GM12878 (cell line): ENCODE measurements at regions of chr16 and their contacts with region 1.

Region 1: GRCh38 chr16:30407102-30407803 is at the start of gene ZNF771:
- DNase-seq: no peak
- ATAC-seq: peak; percentile 93
- H3K4me3 ChIP-seq: peak within 1 kb of the TSS; percentile 83
- H3K27ac ChIP-seq: no peak within 1 kb of the TSS
- H3K4me1 ChIP-seq: peaks cover 14% of the 10 kb centered on the region
- H3K27me3 ChIP-seq: no peaks in the 10 kb centered on the region; a peak in 1 of 4 replicates
- CTCF ChIP-seq: peak in 1 of 3 experiments; percentile 21; a peak in 1 of 6 replicates
- EP300 ChIP-seq: no peak
- POLR2A ChIP-seq: peak; percentile 82
- RAD21 ChIP-seq: no peak
- polyA plus RNA-seq, gene ZNF771: 0.98 to 2.0 TPM

Region 2: DNA sequence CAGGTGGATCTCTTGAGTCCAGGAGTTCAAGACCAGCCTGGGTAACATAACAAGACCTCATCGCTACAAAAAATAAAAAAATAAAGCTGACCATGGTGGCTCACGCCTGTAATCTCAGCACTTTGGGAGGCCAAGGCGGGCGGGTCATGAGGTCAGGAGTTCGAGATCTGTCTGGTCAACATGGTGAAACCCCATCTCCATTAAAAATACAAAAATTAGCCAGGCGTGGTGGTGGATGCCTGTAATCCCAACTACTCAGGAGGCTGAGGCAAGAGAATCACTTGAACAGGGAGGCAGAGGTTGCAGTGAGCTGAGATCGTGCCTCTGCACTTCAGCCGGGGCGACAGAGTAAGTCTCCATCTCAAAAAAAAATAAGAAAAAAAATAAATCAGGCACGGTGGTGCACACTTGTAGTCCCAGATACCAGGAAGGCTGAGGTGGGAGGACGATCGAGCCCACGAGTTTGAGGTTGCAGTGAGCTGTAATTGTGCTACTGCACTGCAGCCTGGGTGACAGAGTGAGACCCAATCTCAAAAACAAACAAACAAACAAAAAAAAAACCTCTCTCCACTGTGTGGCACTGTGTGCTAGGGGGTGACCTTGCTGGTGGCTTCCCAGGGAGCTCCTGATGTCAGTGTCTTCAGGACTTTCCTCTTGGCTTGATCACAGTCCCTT is 264.4 kb before region 1 on chr16:
- CTCF ChIA-PET with region 1: interaction called, 19 read pairs
- POLR2A ChIA-PET with region 1: no interaction called
- RAD21 ChIA-PET with region 1: interaction called, 7 read pairs
- SMC1A ChIA-PET with region 1: interaction called, 8 read pairs
- in situ Hi-C with region 1: no loop called
- intact Hi-C with region 1: no loop called
- DNase-seq: peak; percentile 30
- ATAC-seq: peak; percentile 91
- H3K4me3 ChIP-seq: no peak overlapping the region
- H3K27ac ChIP-seq: no peak overlapping the region
- H3K4me1 ChIP-seq: peaks cover 6% of the 10 kb centered on the region; the same call in 1 of the 2 replicates
- H3K27me3 ChIP-seq: no peaks in the 10 kb centered on the region
- CTCF ChIP-seq: peak; percentile 38 to 59 (median 48); a peak in 4 of 6 replicates
- EP300 ChIP-seq: no peak
- POLR2A ChIP-seq: no peak
- RAD21 ChIP-seq: peak; percentile 84

Region 3: GRCh38 chr16:30355144-30355894 is 51.9 kb before region 1 on chr16 and contains the start of gene CD2BP2:
- CTCF ChIA-PET with region 1: interaction called, 15 read pairs
- POLR2A ChIA-PET with region 1: interaction called, 3 read pairs
- RAD21 ChIA-PET with region 1: interaction called, 11 read pairs
- SMC1A ChIA-PET with region 1: no interaction called
- in situ Hi-C with region 1: no loop called
- intact Hi-C with region 1: no loop called
- DNase-seq: peak; percentile 93
- ATAC-seq: peak; percentile 81
- H3K4me3 ChIP-seq: peak within 1 kb of the TSS; percentile 94
- H3K27ac ChIP-seq: peak within 1 kb of the TSS; percentile 93
- H3K4me1 ChIP-seq: peaks cover 27% of the 10 kb centered on the region
- H3K27me3 ChIP-seq: no peaks in the 10 kb centered on the region
- CTCF ChIP-seq: no peak
- EP300 ChIP-seq: peak in 1 of 2 experiments; percentile 47; a peak in 1 of 4 replicates
- POLR2A ChIP-seq: peak; percentile 68
- RAD21 ChIP-seq: no peak
- polyA plus RNA-seq, gene CD2BP2: 3.3 to 5.5 TPM

Region 4: DNA sequence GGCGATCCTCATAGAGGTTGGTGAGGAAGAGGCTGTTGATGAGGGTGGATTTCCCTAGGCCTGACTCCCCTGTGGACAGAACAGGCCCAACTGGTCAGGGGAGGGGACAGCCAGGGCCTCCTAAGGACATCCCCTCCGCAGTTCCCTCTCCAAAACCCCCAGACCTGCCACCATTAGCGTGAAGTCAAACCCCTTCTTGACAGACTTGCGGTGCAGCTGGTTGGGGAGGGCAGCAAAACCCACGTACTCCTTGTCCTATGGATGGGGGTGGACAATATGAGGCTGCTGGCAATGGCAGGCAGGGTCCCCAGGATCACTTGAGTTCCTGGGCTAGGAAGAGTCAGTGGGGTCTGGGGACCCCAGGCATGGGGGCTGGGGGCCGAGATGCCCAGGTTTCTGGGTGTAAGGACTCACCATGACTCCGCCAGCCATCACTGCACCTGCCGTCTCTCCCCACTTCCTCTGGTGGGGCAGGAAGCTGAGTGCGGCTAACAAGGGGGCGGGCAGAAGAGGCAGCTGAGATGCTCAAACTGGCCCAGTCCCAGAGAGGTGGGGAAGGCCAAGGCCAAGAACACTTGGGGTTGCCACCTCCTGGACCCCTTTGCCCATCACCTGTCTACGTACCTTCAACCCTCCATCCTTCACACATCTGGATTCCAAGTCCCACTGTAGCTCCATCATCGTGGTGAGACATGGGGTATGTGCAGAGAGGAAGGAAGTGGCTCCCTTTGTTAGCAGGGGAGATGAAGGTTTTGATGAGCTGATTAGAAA is 25.0 kb before region 1 on chr16 and contains the start of gene SEPTIN1:
- CTCF ChIA-PET with region 1: interaction called, 23 read pairs
- POLR2A ChIA-PET with region 1: interaction called, 5 read pairs
- RAD21 ChIA-PET with region 1: interaction called, 25 read pairs
- SMC1A ChIA-PET with region 1: interaction called, 12 read pairs
- in situ Hi-C with region 1: no loop called
- intact Hi-C with region 1: no loop called
- DNase-seq: peak; percentile 40
- ATAC-seq: peak; percentile 61
- H3K4me3 ChIP-seq: peak within 1 kb of the TSS; percentile 97
- H3K27ac ChIP-seq: peak within 1 kb of the TSS; percentile 91
- H3K4me1 ChIP-seq: peaks cover 26% of the 10 kb centered on the region
- H3K27me3 ChIP-seq: no peaks in the 10 kb centered on the region
- CTCF ChIP-seq: no peak
- EP300 ChIP-seq: no peak
- POLR2A ChIP-seq: peak; percentile 92
- RAD21 ChIP-seq: no peak
- polyA plus RNA-seq, gene SEPTIN1: 2.8 to 16.0 TPM

Region 5: GRCh38 chr16:30417529-30418349 is 10.5 kb after region 1 on chr16:
- CTCF ChIA-PET with region 1: interaction called, 20 read pairs
- POLR2A ChIA-PET with region 1: interaction called, 7 read pairs
- RAD21 ChIA-PET with region 1: interaction called, 17 read pairs
- SMC1A ChIA-PET with region 1: interaction called, 7 read pairs
- in situ Hi-C with region 1: no loop called
- intact Hi-C with region 1: no loop called
- DNase-seq: peak; percentile 84
- ATAC-seq: peak; percentile 97
- H3K4me3 ChIP-seq: peak overlapping the region; percentile 69
- H3K27ac ChIP-seq: peak overlapping the region; percentile 47
- H3K4me1 ChIP-seq: peaks cover 8% of the 10 kb centered on the region
- H3K27me3 ChIP-seq: no peaks in the 10 kb centered on the region
- CTCF ChIP-seq: peak in 2 of 3 experiments; percentile 29 to 33; a peak in 3 of 6 replicates
- EP300 ChIP-seq: peak in 1 of 2 experiments; percentile 33; a peak in 1 of 4 replicates
- POLR2A ChIP-seq: peak; percentile 84; the same call in 1 of the 2 replicates
- RAD21 ChIP-seq: no peak

Region 6: GRCh38 chr16:30637942-30638341 is 230.7 kb after region 1 on chr16:
- CTCF ChIA-PET with region 1: interaction called, 5 read pairs
- POLR2A ChIA-PET with region 1: interaction called, 10 read pairs
- RAD21 ChIA-PET with region 1: no interaction called
- SMC1A ChIA-PET with region 1: no interaction called
- in situ Hi-C with region 1: no loop called
- intact Hi-C with region 1: no loop called
- DNase-seq: no peak
- ATAC-seq: peak; percentile 38
- H3K4me3 ChIP-seq: no peak overlapping the region
- H3K27ac ChIP-seq: no peak overlapping the region
- H3K4me1 ChIP-seq: no peaks in the 10 kb centered on the region
- H3K27me3 ChIP-seq: no peaks in the 10 kb centered on the region
- CTCF ChIP-seq: peak; percentile 61 to 70 (median 63); a peak in 5 of 6 replicates
- EP300 ChIP-seq: no peak
- POLR2A ChIP-seq: no peak
- RAD21 ChIP-seq: peak; percentile 58